ENCODE measurements at regions of chr2 and their contacts with region 1.

Region 1: GRCh38 chr2:7037340-7038333 is 120.4 kb downstream of the RNF144A start:
- DNase-seq: peak; percentile 49 to 62 (median 55)
- H3K4me3 ChIP-seq: no peak overlapping the region
- H3K4me3 Mint-ChIP-seq: no peak overlapping the region
- H3K27ac ChIP-seq: no peak overlapping the region
- H3K27ac Mint-ChIP-seq: no peak overlapping the region
- H3K4me1 ChIP-seq: no peaks in the 10 kb centered on the region
- H3K4me1 Mint-ChIP-seq: peaks cover 5% of the 10 kb centered on the region
- H3K27me3 ChIP-seq: no peaks in the 10 kb centered on the region
- H3K27me3 Mint-ChIP-seq: no peaks in the 10 kb centered on the region
- CTCF ChIP-seq: peak; percentile 85

Region 2: DNA sequence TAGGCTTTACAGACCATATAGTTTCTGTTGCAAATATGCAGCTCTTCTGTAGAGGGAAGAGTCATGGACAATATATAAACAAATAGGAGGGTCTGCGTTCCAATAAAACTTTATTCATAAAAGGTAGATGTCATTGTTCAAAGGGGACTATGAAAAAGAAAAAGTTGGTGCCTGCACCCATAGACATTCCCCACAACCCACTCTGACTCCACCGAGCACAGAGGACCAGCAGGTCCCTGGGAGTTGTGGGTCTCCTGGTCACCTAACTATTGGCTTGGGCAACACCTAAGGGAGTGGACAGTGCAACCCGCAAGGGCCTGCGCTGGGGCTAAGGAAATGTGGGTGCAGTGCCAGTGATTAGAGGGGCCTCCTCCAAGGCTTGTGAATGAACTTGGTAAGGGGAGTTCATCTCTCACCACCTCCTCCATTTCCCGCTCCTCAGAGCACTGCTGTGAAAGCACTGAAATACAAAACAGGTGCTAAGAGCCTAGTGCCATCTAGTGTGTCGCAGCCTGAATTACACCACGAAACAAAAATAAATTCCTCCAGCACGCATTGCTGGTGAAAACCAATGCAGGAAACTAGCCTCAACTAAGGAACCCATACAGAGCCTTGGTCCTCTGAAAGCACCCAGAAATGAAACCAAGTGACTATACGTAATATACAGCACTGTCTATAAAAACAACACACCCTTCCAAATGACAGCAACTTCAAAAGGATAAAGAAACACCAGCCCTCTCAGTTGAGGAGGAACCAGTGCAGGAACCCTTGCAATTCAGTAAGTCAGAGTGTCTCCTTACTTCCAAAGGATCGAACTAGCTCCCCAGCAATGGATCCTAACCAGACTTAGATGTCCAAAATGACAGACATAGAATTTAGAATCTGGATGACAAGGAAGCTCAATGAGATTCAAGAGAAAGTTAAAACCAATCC is 46.2 kb after region 1 on chr2:
- intact Hi-C with region 1: loop called in 1 of 2 experiments (anchors 5 kb)
- DNase-seq: peak in 2 of 3 donors; percentile 3 to 15
- H3K4me3 ChIP-seq: no peak overlapping the region
- H3K4me3 Mint-ChIP-seq: no peak overlapping the region
- H3K27ac ChIP-seq: no peak overlapping the region
- H3K27ac Mint-ChIP-seq: no peak overlapping the region
- H3K4me1 ChIP-seq: no peaks in the 10 kb centered on the region
- H3K4me1 Mint-ChIP-seq: no peaks in the 10 kb centered on the region
- H3K27me3 ChIP-seq: no peaks in the 10 kb centered on the region
- H3K27me3 Mint-ChIP-seq: peaks cover 0 to 3% (median 1%) of the 10 kb centered on the region in 3 donors
- CTCF ChIP-seq: peak; percentile 68

Region 3: GRCh38 chr2:7324706-7325105 is 287.1 kb after region 1 on chr2:
- intact Hi-C with region 1: no loop called
- DNase-seq: no peak
- H3K4me3 ChIP-seq: no peak overlapping the region
- H3K4me3 Mint-ChIP-seq: no peak overlapping the region
- H3K27ac ChIP-seq: no peak overlapping the region
- H3K27ac Mint-ChIP-seq: no peak overlapping the region
- H3K4me1 ChIP-seq: no peaks in the 10 kb centered on the region
- H3K4me1 Mint-ChIP-seq: no peaks in the 10 kb centered on the region
- H3K27me3 ChIP-seq: no peaks in the 10 kb centered on the region
- H3K27me3 Mint-ChIP-seq: peaks cover 0 to 6% (median 0%) of the 10 kb centered on the region in 3 donors
- CTCF ChIP-seq: no peak

Region 4: GRCh38 chr2:7766088-7766722 is 728.6 kb after region 1 on chr2:
- intact Hi-C with region 1: no loop called
- DNase-seq: no peak
- H3K4me3 ChIP-seq: no peak overlapping the region
- H3K4me3 Mint-ChIP-seq: no peak overlapping the region
- H3K27ac ChIP-seq: no peak overlapping the region
- H3K27ac Mint-ChIP-seq: no peak overlapping the region
- H3K4me1 ChIP-seq: peaks cover 0 to 2% of the 10 kb centered on the region in 2 donors
- H3K4me1 Mint-ChIP-seq: peaks cover 9% of the 10 kb centered on the region
- H3K27me3 ChIP-seq: no peaks in the 10 kb centered on the region
- H3K27me3 Mint-ChIP-seq: peaks cover 0 to 3% (median 1%) of the 10 kb centered on the region in 3 donors
- CTCF ChIP-seq: no peak